ENCODE measurements at regions of chr19 and their contacts with region 1.

Region 1: GRCh38 chr19:9435279-9436268 is at the start of gene ZNF266:
- DNase-seq: peak; percentile 88
- H3K4me3 Mint-ChIP-seq: peak within 1 kb of the TSS; percentile 94
- H3K27ac Mint-ChIP-seq: peak within 1 kb of the TSS; percentile 97
- H3K4me1 Mint-ChIP-seq: peaks cover 29% of the 10 kb centered on the region
- H3K27me3 Mint-ChIP-seq: no peaks in the 10 kb centered on the region
- total RNA-seq, gene ZNF266: 25.3 and 28.2 TPM in 2 replicates

Region 2: GRCh38 chr19:9205501-9206113 is 230.0 kb before region 1 on chr19:
- intact Hi-C with region 1: loop called (anchors 1 kb)
- DNase-seq: peak; percentile 52
- H3K4me3 Mint-ChIP-seq: peak overlapping the region; percentile 37
- H3K27ac Mint-ChIP-seq: no peak overlapping the region
- H3K4me1 Mint-ChIP-seq: peaks cover 6% of the 10 kb centered on the region
- H3K27me3 Mint-ChIP-seq: no peaks in the 10 kb centered on the region

Region 3: GRCh38 chr19:9323919-9324583 is 111.5 kb before region 1 on chr19 and contains the start of gene ZNF559:
- intact Hi-C with region 1: loop called (anchors 1 kb)
- DNase-seq: peak; percentile 93
- H3K4me3 Mint-ChIP-seq: peak within 1 kb of the TSS; percentile 89
- H3K27ac Mint-ChIP-seq: peak within 1 kb of the TSS; percentile 92
- H3K4me1 Mint-ChIP-seq: peaks cover 25% of the 10 kb centered on the region
- H3K27me3 Mint-ChIP-seq: no peaks in the 10 kb centered on the region
- total RNA-seq, gene ZNF559: 5.0 and 6.4 TPM in 2 replicates

Region 4: GRCh38 chr19:9538183-9539058 is 102.8 kb after region 1 on chr19 and contains the start of gene ZNF426:
- intact Hi-C with region 1: loop called (anchors 1 kb)
- DNase-seq: peak; percentile 76
- H3K4me3 Mint-ChIP-seq: peak within 1 kb of the TSS; percentile 97
- H3K27ac Mint-ChIP-seq: peak within 1 kb of the TSS; percentile 98
- H3K4me1 Mint-ChIP-seq: peaks cover 5% of the 10 kb centered on the region
- H3K27me3 Mint-ChIP-seq: no peaks in the 10 kb centered on the region
- total RNA-seq, gene ZNF426: 10.2 and 10.3 TPM in 2 replicates